ENCODE measurements at regions of chr11 and their contacts with region 1.

Region 1: GRCh38 chr11:69888483-69889076 is 69.4 kb upstream of the FGF3 start:
- DNase-seq: peak in 7 of 10 donors; percentile 58 to 92 (median 74)

Region 2: DNA sequence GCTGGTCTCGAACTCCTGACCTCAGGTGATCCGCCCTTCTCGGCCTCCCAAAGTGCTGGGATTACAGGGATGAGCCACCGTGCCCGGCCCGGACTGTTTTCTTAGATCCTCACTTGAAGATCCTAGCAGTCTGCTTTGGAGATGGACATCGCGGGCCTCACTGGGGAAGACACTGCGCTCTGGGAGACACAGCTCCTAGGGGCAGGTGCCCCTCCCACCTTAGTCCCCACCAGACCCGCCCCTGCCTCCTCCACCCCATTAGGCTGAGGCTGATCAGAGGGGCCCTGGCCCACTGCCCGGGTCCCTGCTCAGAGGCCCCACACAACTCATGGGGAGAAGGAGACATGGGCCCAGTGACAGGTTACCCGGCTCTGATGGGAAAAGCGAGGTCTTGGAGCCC is 202.1 kb before region 1 on chr11:
- intact Hi-C with region 1: loop called (anchors 1 kb)
- DNase-seq: peak in 2 of 10 donors; percentile 76 to 78

Region 3: DNA sequence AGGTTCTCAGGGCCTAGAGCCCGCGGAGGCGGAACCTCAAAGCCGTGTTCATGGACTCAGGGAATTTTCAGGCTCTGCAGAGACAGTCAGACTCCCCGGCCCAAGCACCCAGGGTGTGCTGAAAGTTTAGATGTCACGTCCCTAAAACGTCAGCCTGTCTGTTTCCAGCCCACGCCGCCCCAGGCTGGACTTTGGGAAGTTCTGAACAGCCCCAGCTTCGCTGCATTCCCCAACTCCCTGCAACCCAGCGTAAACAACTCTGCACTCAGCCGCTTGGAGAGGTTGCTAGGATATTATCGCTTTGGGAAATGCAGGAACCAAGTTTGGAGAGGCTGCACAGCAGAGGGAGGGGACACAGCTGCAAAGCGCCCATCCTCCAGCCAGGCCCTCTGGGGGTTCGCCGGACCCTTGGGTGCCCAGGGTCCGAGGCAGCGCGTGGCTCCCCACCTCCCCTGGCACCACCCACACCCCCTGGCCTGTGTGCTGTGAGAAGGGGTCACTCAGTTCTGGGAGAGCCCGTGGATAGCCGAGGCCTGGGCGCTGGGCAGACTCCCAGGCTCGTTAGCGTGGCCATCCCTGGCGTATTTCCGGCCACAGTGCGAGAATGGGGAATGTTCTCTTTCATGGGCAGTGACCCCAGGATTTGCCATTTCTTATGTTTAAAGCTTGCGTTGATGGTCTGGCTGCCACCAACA is 51.1 kb after region 1 on chr11:
- intact Hi-C with region 1: no loop called
- DNase-seq: peak in 2 of 10 donors; percentile 48 to 67

Measured in posterior cingulate gyrus (tissue), 11 donors.